ENCODE measurements at regions of chr17 and their contacts with region 1.

Region 1: GRCh38 chr17:39730095-39730921 is at the start of gene MIEN1:
- DNase-seq: peak; percentile 90 to 95
- ATAC-seq: peak; percentile 95 to 98 (median 98)
- H3K4me3 ChIP-seq: peak within 1 kb of the TSS; percentile 69 to 93 (median 85)
- H3K27ac ChIP-seq: peak within 1 kb of the TSS; percentile 55 to 99 (median 92)
- H3K4me1 ChIP-seq: peaks cover 4 to 16% (median 9%) of the 10 kb centered on the region in 9 donors
- H3K27me3 ChIP-seq: peaks cover 0 to under 1% (median 0%) of the 10 kb centered on the region in 7 donors
- CTCF ChIP-seq: peak; percentile 87 to 98 (median 95)
- total RNA-seq, gene MIEN1: 27.7 to 68.4 (median 39.1) TPM

Region 2: DNA sequence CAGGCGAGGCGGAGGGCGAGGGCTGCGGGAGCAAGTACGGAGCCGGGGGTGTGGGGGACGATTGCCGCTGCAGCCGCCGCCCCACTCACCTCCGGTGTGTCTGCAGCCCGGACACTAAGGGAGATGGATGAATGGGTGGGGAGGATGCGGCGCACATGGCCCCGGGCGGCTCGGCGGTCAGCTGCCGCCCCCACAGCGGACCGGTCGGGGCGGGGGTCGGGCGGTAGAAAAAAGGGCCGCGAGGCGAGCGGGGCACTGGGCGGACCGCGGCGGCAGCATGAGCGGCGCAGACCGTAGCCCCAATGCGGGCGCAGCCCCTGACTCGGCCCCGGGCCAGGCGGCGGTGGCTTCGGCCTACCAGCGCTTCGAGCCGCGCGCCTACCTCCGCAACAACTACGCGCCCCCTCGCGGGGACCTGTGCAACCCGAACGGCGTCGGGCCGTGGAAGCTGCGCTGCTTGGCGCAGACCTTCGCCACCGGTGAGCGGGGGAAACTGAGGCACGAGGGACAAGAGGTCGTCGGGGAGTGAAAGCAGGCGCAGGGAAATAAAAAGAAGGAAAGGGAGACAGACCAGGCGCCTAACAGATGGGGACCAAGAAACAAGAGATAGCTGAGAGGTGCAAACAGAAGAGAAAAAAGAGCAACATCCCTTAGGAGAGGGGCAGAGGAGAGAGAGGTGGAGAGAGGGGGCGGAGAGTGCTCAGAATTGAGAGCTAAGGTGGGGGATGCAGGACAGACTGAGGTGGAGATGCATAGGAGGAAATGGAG is 61.9 kb before region 1 on chr17 and contains the start of gene PNMT:
- intact Hi-C with region 1: loop called in 1 of 10 experiments (anchors 5 kb)
- DNase-seq: peak; percentile 68 to 83
- ATAC-seq: peak in 3 of 8 donors; percentile 2 to 31 (median 6)
- H3K4me3 ChIP-seq: peak within 1 kb of the TSS; percentile 24 to 77 (median 52)
- H3K27ac ChIP-seq: peak within 1 kb of the TSS; percentile 88 to 98 (median 94)
- H3K4me1 ChIP-seq: peaks cover 25 to 78% (median 51%) of the 10 kb centered on the region in 9 donors
- H3K27me3 ChIP-seq: peaks cover 0 to 59% (median 8%) of the 10 kb centered on the region in 7 donors
- CTCF ChIP-seq: peak; percentile 52 to 81 (median 65)
- total RNA-seq, gene PNMT: 2.7 to 12.8 (median 3.9) TPM

Region 3: GRCh38 chr17:39687811-39688518 is 42.3 kb before region 1 on chr17 and contains the start of gene PGAP3:
- intact Hi-C with region 1: loop called in 4 of 10 experiments (anchors 5 kb)
- DNase-seq: peak; percentile 89
- ATAC-seq: peak; percentile 95 to 96 (median 95)
- H3K4me3 ChIP-seq: peak within 1 kb of the TSS; percentile 62 to 90 (median 68)
- H3K27ac ChIP-seq: peak within 1 kb of the TSS; percentile 88 to 98 (median 94)
- H3K4me1 ChIP-seq: peaks cover 2 to 19% (median 14%) of the 10 kb centered on the region in 9 donors
- H3K27me3 ChIP-seq: no peaks in the 10 kb centered on the region
- CTCF ChIP-seq: peak in 2 of 9 donors; percentile 16 to 22
- total RNA-seq, gene PGAP3: 9.2 to 18.2 (median 13.8) TPM

Region 4: GRCh38 chr17:39694593-39694992 is 35.7 kb before region 1 on chr17:
- intact Hi-C with region 1: loop called in 4 of 10 experiments (anchors 5 kb)
- DNase-seq: no peak
- ATAC-seq: no peak
- H3K4me3 ChIP-seq: no peak overlapping the region
- H3K27ac ChIP-seq: no peak overlapping the region
- H3K4me1 ChIP-seq: peaks cover 0 to 8% (median 3%) of the 10 kb centered on the region in 9 donors
- H3K27me3 ChIP-seq: peaks cover 0 to 9% (median 0%) of the 10 kb centered on the region in 7 donors
- CTCF ChIP-seq: no peak

Region 5: GRCh38 chr17:39702901-39703893 is 27.1 kb before region 1 on chr17:
- intact Hi-C with region 1: loop called in 1 of 10 experiments (anchors 1 kb)
- DNase-seq: no peak
- ATAC-seq: peak in 3 of 8 donors; percentile 11 to 43 (median 34)
- H3K4me3 ChIP-seq: no peak overlapping the region
- H3K27ac ChIP-seq: peak overlapping the region in 7 of 10 donors; percentile 27 to 88 (median 45)
- H3K4me1 ChIP-seq: peaks cover 10 to 68% (median 44%) of the 10 kb centered on the region in 9 donors
- H3K27me3 ChIP-seq: peaks cover 0 to 33% (median 0%) of the 10 kb centered on the region in 7 donors
- CTCF ChIP-seq: no peak

Region 6: DNA sequence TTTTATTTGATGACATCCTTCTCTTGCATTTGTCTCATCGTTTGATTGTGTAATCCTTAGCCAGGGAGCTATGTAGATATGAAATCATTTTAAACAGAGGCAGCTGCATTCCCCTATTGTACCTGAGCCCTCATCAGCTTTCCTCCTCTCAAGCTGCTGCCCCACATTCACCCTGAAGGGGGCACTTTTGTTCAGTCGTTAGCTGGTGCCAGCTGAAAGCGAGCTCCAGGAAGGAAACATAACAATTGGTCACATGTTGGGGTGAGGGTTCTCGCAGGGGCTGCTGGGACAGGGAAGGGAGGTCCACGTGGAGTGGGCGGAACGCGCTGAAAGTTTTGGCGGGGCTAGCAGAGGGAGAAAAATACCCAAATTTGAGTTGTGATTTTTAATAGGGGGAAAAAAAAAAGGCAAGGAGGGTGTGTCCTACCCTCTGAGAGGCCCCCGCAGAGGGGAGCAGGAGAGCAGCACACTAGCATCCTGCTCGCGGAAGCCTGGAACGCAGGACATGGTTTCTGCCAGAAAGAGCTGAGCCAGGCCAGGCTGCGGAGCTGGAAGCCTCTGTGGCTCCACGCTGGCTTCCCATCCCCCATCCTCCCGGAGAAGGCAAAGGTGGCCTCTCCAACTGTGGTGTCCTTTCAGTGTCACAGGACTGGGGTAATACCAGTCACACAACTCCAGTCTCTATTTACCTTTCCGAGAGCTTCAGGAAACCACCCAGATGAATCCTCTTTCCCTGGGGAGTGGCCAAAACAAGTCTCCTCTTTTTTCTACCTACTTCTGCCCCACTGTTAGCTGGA is 383.0 kb after region 1 on chr17:
- intact Hi-C with region 1: no loop called
- DNase-seq: peak; percentile 86 to 95
- ATAC-seq: peak; percentile 70 to 79 (median 75)
- H3K4me3 ChIP-seq: peak overlapping the region in 9 of 10 donors; percentile 32 to 59 (median 49)
- H3K27ac ChIP-seq: peak overlapping the region; percentile 71 to 99 (median 93)
- H3K4me1 ChIP-seq: peaks cover 41 to 62% (median 58%) of the 10 kb centered on the region in 9 donors
- H3K27me3 ChIP-seq: no peaks in the 10 kb centered on the region
- CTCF ChIP-seq: peak; percentile 72 to 96 (median 84)